Activated naive CD4-positive, alpha-beta T cell treated with anti-CD3 and anti-CD28 coated beads, Interleukin-2, amount 10 ng/mL, durations not matched to agents 7 days and 5 days (primary cell): ENCODE measurements at regions of chr1 and their contacts with region 1.

Region 1: GRCh38 chr1:9784508-9785133 is 39.1 kb downstream of the CLSTN1 start:
- DNase-seq: peak; percentile 81
- H3K4me3 Mint-ChIP-seq: no peak overlapping the region
- H3K27ac Mint-ChIP-seq: no peak overlapping the region
- H3K4me1 Mint-ChIP-seq: peaks cover 59% of the 10 kb centered on the region
- H3K27me3 Mint-ChIP-seq: no peaks in the 10 kb centered on the region

Region 2: DNA sequence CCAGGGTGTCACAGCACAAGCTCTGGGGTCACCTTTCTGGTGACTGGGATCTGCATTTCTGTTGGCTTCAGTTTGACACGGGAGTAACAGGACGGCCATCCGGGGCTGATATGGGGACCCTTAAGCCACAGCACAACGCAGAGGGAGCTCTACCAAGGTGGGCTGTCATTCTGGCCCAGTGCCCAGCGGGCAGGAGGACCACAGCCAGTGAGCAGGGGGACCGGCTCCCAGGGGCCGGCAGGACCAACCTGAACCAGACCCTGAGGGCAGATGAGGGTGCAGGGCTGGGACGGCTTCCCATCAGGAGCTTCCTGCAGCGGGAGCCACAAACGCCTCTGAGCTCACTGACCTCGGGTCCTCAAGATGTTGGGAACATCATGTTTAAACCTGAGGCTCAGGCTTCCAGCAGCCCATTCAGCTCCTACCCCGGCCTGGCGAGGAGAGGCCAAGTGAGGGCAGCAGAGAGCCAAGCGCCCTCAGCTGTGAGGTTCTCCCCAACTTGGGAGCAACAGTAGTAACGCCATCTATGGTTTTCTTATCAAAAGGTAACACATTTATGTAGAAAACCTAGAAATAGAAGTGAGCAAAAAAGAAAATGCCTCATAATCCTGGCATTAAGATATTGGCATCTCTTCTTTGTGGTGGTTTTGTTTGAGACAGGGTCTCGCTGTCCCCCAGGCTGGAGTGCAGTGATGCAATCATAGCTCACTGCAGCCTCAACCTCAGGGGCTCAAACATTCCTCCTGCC is 169.1 kb before region 1 on chr1:
- CTCF ChIA-PET with region 1: interaction called, 10 read pairs
- DNase-seq: peak; percentile 79
- H3K4me3 Mint-ChIP-seq: no peak overlapping the region
- H3K27ac Mint-ChIP-seq: no peak overlapping the region
- H3K4me1 Mint-ChIP-seq: no peaks in the 10 kb centered on the region
- H3K27me3 Mint-ChIP-seq: peaks cover 17% of the 10 kb centered on the region

Region 3: DNA sequence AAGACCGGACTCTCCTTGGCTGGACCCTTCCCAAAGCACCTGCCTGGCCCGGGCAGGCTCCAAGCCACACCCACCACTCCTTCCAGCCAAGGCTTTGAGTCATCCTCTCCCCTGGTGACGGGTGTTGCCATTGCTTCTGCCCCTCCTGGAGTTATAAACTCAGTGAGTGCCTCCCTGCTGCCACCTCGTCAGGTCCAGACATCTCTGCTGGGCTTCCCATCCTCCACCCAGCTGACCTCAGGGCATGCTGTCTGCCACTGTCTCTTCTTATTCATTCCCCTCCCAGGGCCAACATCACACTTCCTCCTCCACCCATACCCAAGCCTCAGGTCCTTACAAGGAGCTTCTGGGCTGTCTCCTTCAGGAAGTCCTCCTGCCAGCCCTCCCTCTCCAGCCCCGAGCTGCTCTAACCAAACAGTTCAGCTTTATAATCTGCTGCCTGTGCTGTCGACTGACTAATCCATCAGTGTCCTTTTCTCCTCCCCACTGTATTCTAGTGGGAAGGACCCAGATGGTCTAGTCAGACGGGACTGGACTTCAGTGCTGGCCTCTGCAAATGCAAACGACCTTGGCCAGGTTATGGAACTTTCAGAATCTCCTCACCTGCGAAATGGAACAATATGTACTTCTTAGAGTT is 41.0 kb after region 1 on chr1:
- CTCF ChIA-PET with region 1: interaction called, 17 read pairs
- DNase-seq: peak; percentile 54
- H3K4me3 Mint-ChIP-seq: peak overlapping the region; percentile 39
- H3K27ac Mint-ChIP-seq: peak overlapping the region; percentile 50
- H3K4me1 Mint-ChIP-seq: peaks cover 47% of the 10 kb centered on the region
- H3K27me3 Mint-ChIP-seq: peaks cover 44% of the 10 kb centered on the region

Region 4: DNA sequence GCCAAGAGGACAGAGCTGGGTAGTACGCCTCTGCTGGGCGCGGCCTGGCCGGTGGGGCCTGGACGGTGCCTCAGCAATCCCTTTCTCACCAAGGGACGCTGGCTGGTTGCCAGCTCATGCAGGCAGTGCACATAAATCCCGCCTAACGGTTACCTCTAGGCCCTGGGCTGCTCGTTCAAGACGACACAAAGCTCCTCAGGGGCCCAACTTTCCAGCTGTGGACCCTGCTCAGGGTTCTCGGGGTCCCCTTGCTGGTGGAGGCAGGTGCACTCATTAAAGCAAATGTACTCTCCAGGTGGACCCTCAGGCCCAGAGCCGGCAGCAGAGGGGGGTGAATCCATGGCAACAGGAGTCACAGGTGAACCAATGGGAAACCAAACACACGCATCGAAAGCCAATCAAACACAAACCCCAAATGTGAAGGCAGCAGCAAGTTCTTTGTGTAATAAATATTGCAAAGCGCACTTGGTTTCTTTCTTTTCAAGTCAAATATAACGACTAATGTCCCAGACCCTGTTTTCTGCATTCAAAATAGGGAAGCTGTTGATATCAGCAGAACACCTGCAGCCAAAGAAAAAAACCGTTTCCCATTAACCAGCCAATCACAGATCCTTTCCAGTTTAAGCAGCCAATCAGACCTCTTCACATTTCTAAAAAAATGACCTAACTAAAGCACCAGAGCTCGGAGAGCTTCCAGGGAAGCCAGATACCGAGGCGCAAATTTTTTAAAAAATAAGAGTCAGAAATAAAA is 65.2 kb after region 1 on chr1:
- CTCF ChIA-PET with region 1: interaction called, 20 read pairs
- DNase-seq: no peak
- H3K4me3 Mint-ChIP-seq: peak overlapping the region; percentile 27
- H3K27ac Mint-ChIP-seq: peak overlapping the region; percentile 6
- H3K4me1 Mint-ChIP-seq: peaks cover 29% of the 10 kb centered on the region
- H3K27me3 Mint-ChIP-seq: peaks cover 28% of the 10 kb centered on the region

Region 5: DNA sequence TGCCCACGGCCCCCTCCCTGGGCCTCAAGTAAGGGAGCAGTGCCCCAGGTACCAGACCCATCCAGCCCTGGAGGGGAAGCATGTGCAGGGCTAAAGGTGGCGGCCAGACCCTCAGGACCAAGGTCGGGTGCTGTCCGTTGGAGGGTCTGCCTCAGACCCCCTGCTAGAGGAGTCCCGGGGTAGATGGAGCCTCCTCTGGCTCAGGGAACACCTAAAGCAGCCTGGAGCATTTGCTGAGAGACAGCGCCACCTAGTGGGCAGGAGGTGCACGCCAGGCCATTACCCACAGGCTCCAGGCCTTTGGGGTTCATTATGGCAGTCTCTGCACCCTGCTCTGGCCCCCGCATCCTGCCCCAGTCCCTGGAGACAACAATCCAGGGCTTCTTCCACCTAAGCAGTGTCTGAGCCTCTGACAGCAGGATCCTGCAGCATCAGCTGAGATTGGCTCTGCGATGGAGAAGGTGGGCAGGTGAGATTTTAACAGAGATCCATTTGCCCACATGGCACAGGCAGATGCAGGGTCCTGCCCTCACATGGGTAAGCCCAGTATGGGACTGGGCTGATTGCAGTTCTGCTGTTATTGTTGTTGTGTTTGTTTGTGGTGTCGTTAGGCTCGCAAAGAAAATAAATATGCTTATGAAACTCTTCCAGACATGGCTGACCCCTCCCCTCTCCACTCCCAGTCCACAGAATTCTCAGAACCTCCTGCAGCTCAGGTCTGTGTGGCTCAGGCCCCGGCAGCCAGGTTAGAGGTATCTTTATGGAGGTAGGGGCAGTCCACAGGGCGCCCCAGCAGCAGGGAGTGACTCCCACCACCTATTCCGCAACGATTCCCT is 83.0 kb after region 1 on chr1:
- CTCF ChIA-PET with region 1: interaction called, 314 read pairs
- DNase-seq: peak; percentile 92
- H3K4me3 Mint-ChIP-seq: no peak overlapping the region
- H3K27ac Mint-ChIP-seq: no peak overlapping the region
- H3K4me1 Mint-ChIP-seq: peaks cover 12% of the 10 kb centered on the region
- H3K27me3 Mint-ChIP-seq: peaks cover under 1% of the 10 kb centered on the region